Colonic mucosa (tissue), 4 donors: ENCODE measurements at regions of chr11 and their contacts with region 1.

Region 1: DNA sequence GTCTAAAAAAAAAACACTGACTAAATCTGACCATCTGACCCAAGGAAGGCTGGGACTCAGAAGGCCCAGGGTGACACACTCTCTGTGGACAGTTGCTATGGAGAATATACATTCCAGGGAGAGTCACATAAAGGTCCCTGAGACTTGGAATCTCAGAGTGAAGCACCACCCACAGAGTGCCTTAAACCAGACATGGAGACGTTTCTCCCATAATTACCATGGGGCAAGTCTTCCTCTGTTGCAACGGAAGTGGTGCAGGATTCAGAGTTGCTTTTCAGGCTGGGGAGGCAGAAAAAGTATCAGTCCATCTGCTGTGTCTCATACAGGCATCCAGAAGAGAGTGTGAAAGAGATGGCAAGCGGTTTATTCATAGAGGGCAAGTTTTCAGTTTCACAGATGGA is 58.7 kb upstream of the SLN start:
- DNase-seq: no peak
- H3K4me3 ChIP-seq: no peak overlapping the region
- H3K27ac ChIP-seq: no peak overlapping the region
- H3K4me1 ChIP-seq: no peaks in the 10 kb centered on the region
- H3K27me3 ChIP-seq: no peaks in the 10 kb centered on the region
- CTCF ChIP-seq: no peak

Region 2: DNA sequence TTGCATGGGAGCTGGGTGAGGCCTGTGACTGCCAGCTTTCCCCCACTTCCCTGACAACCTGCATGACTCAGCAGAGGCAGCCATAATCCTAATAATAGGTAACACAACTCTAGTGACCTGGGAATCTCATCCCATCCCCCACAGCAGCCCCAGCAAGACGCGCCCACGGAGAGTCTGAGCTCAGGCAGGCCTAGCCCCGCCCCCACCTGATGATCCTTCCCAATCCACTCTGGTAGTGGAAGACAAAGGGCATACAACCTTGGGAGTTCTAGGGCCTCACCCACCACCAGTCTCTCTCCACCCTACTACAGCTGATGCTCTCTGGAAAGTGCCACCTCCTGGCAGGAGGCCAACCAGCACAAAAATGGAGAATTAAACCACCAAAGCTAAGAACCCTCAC is 373.2 kb before region 1 on chr11:
- intact Hi-C with region 1: no loop called
- DNase-seq: no peak
- H3K4me3 ChIP-seq: no peak overlapping the region
- H3K27ac ChIP-seq: no peak overlapping the region
- H3K4me1 ChIP-seq: no peaks in the 10 kb centered on the region
- H3K27me3 ChIP-seq: no peaks in the 10 kb centered on the region
- CTCF ChIP-seq: no peak

Region 3: GRCh38 chr11:107550304-107550703 is 220.2 kb before region 1 on chr11:
- intact Hi-C with region 1: loop called (anchors 10 kb)
- DNase-seq: no peak
- H3K4me3 ChIP-seq: no peak overlapping the region
- H3K27ac ChIP-seq: no peak overlapping the region
- H3K4me1 ChIP-seq: no peaks in the 10 kb centered on the region
- H3K27me3 ChIP-seq: no peaks in the 10 kb centered on the region
- CTCF ChIP-seq: no peak

Region 4: DNA sequence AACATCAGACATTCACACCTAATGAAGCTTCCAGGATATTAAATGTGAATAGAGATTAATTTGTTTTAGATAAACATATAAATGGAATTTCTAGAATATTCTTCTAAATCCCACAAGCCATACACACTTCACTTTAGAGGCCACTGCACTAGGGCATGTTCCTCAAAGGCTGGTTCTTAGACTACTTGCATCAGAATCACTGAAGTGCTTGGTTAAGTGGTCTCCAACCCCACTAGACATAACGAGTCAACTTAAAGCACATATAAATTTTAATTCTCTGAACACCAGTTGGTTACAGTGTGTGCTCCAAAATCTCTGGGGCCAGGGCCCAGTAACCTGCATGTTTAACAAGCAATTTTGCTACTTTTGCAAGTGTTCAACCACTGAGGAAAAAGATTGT is 197.1 kb before region 1 on chr11:
- intact Hi-C with region 1: loop called (anchors 10 kb)
- DNase-seq: no peak
- H3K4me3 ChIP-seq: no peak overlapping the region
- H3K27ac ChIP-seq: no peak overlapping the region
- H3K4me1 ChIP-seq: no peaks in the 10 kb centered on the region
- H3K27me3 ChIP-seq: no peaks in the 10 kb centered on the region
- CTCF ChIP-seq: no peak

Region 5: DNA sequence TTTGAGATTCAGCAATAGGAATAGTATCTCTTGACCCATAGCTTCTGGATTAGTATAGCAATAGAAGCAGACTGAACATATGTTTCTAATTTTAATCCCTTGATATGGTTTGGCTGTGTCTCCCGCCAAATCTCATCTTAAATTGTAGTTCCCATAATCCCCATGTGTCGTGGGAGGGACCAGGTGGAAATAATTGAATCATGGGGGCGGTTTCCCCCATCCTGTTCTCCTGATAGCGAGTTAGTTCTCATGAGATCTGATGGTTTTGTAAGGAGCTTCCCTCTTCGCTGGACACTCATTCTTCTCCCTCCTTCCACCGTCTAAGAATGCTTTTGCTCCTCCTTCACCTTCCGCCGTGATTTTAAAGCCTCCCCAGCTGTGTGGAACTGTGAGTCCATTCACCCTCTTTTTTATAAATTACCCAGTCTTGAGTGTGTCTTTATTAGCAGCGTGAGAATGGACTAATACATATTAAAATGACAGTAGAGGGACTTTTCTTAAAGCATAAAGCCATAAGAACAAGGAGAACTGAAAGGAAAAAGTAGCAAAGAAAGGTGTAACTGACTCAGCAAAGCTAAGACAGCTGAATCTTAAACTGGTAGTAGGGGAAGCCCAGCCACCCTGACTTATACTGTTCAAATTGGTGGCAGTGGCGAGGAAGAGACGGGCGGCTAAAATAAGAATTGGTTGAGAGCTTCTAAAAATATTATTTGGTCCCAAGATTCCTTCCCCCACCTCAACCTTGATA is 38.4 kb before region 1 on chr11:
- intact Hi-C with region 1: no loop called
- DNase-seq: no peak
- H3K4me3 ChIP-seq: no peak overlapping the region
- H3K27ac ChIP-seq: no peak overlapping the region
- H3K4me1 ChIP-seq: no peaks in the 10 kb centered on the region
- H3K27me3 ChIP-seq: no peaks in the 10 kb centered on the region
- CTCF ChIP-seq: no peak